ENCODE measurements at regions of chr6 and their contacts with region 1.

Region 1: GRCh38 chr6:11270030-11271027 is 37.9 kb upstream of the NEDD9 start:
- DNase-seq: no peak
- ATAC-seq: no peak
- H3K4me3 ChIP-seq: no peak overlapping the region
- H3K4me3 Mint-ChIP-seq: no peak overlapping the region
- H3K27ac ChIP-seq: no peak overlapping the region
- H3K27ac Mint-ChIP-seq: no peak overlapping the region
- H3K4me1 ChIP-seq: peaks cover 0 to under 1% of the 10 kb centered on the region in 2 experiments
- H3K4me1 Mint-ChIP-seq: peaks cover 9 to 24% (median 16%) of the 10 kb centered on the region in 3 donors
- H3K27me3 ChIP-seq: no peaks in the 10 kb centered on the region
- H3K27me3 Mint-ChIP-seq: no peaks in the 10 kb centered on the region

Region 2: DNA sequence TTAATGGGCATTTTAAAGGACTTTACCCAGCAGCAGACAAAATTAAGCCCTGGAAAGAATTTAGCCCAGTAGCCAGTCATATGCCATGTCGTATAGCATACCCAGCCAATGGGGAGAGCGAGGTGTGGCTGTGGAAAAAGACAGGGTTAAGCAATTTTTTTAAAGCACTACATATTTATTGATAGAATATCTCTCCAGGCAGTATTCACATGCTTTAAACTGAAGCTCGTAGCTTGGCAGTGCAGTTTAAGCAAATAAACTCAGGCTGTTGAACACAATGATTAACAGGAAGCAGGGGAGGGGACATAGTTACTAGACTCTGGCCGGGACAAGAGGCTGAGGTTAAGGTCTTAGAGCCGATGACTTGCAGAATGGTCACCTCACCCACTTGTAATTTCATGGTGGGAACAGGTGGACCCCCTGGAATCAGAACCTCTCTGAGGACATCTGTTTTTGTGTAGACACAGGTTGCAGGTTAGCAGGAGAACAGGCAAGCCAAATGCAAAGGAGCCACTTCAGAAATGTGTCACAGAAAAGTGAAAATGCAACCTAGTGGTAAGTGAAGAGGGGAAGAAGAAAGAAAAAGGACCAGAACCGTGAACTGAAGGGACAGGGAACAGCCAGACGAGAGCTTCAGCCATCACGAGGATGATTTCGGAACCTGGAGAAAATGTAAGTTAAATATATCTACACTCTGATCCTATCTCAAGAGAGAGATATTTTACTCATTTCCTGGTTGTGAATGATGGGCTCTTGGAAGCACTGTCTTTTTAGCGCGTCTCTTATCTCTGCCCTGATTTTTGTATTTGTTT is 742.0 kb before region 1 on chr6:
- CTCF ChIA-PET with region 1: no interaction called
- POLR2A ChIA-PET with region 1: no interaction called
- DNase-seq: peak in 7 of 35 experiments; percentile 2 to 40 (median 15)
- ATAC-seq: peak; percentile 70 to 81 (median 77)
- H3K4me3 ChIP-seq: peak overlapping the region; percentile 61 to 84
- H3K4me3 Mint-ChIP-seq: peak overlapping the region; percentile 89 to 93 (median 90)
- H3K27ac ChIP-seq: peak overlapping the region; percentile 39
- H3K27ac Mint-ChIP-seq: peak overlapping the region; percentile 78 to 94
- H3K4me1 ChIP-seq: peaks cover 0 to 40% of the 10 kb centered on the region in 2 experiments
- H3K4me1 Mint-ChIP-seq: peaks cover 42 to 45% (median 44%) of the 10 kb centered on the region in 3 donors
- H3K27me3 ChIP-seq: peaks cover 0 to 5% of the 10 kb centered on the region in 2 experiments
- H3K27me3 Mint-ChIP-seq: peaks cover 0 to 1% of the 10 kb centered on the region in 2 donors

Region 3: GRCh38 chr6:11309947-11310665 is 39.8 kb after region 1 on chr6:
- CTCF ChIA-PET with region 1: no interaction called
- POLR2A ChIA-PET with region 1: no interaction called
- DNase-seq: peak in 1 of 35 experiments; percentile 7
- ATAC-seq: no peak
- H3K4me3 ChIP-seq: no peak overlapping the region
- H3K4me3 Mint-ChIP-seq: no peak overlapping the region
- H3K27ac ChIP-seq: no peak overlapping the region
- H3K27ac Mint-ChIP-seq: no peak overlapping the region
- H3K4me1 ChIP-seq: no peaks in the 10 kb centered on the region
- H3K4me1 Mint-ChIP-seq: peaks cover 9 to 25% (median 16%) of the 10 kb centered on the region in 3 donors
- H3K27me3 ChIP-seq: no peaks in the 10 kb centered on the region
- H3K27me3 Mint-ChIP-seq: no peaks in the 10 kb centered on the region

Region 4: GRCh38 chr6:11350294-11350969 is 80.1 kb after region 1 on chr6:
- CTCF ChIA-PET with region 1: no interaction called
- POLR2A ChIA-PET with region 1: interaction called in 1 of 2 experiments, 11 read pairs
- DNase-seq: peak in 5 of 35 experiments; percentile 9 to 37 (median 16)
- ATAC-seq: no peak
- H3K4me3 ChIP-seq: no peak overlapping the region
- H3K4me3 Mint-ChIP-seq: no peak overlapping the region
- H3K27ac ChIP-seq: no peak overlapping the region
- H3K27ac Mint-ChIP-seq: no peak overlapping the region
- H3K4me1 ChIP-seq: peaks cover 20 to 21% of the 10 kb centered on the region in 2 experiments
- H3K4me1 Mint-ChIP-seq: peaks cover 88 to 97% (median 95%) of the 10 kb centered on the region in 3 donors
- H3K27me3 ChIP-seq: no peaks in the 10 kb centered on the region
- H3K27me3 Mint-ChIP-seq: no peaks in the 10 kb centered on the region

Region 5: DNA sequence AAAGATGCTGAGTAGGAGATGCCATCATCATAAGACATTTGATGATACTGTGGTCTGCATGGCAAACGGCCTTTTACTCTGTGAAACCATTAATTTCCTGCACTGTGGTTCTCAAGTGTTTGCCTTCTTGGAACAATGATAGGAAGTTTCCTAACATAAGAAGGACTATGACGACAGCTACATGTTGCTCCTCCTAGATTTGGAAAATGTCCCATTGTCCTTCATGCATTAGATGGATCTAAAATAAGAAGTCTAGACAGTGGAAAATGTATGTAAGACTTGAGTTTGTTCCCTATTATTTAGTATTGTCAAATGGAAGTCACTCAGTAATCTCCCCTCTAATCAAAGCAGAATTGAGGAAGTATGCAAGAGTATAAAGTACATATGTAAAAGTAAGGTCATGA is 168.7 kb after region 1 on chr6:
- CTCF ChIA-PET with region 1: no interaction called
- POLR2A ChIA-PET with region 1: no interaction called
- DNase-seq: no peak
- ATAC-seq: no peak
- H3K4me3 ChIP-seq: no peak overlapping the region
- H3K4me3 Mint-ChIP-seq: no peak overlapping the region
- H3K27ac ChIP-seq: no peak overlapping the region
- H3K27ac Mint-ChIP-seq: no peak overlapping the region
- H3K4me1 ChIP-seq: no peaks in the 10 kb centered on the region
- H3K4me1 Mint-ChIP-seq: peaks cover 0 to 7% (median 0%) of the 10 kb centered on the region in 3 donors
- H3K27me3 ChIP-seq: no peaks in the 10 kb centered on the region
- H3K27me3 Mint-ChIP-seq: no peaks in the 10 kb centered on the region

Region 6: DNA sequence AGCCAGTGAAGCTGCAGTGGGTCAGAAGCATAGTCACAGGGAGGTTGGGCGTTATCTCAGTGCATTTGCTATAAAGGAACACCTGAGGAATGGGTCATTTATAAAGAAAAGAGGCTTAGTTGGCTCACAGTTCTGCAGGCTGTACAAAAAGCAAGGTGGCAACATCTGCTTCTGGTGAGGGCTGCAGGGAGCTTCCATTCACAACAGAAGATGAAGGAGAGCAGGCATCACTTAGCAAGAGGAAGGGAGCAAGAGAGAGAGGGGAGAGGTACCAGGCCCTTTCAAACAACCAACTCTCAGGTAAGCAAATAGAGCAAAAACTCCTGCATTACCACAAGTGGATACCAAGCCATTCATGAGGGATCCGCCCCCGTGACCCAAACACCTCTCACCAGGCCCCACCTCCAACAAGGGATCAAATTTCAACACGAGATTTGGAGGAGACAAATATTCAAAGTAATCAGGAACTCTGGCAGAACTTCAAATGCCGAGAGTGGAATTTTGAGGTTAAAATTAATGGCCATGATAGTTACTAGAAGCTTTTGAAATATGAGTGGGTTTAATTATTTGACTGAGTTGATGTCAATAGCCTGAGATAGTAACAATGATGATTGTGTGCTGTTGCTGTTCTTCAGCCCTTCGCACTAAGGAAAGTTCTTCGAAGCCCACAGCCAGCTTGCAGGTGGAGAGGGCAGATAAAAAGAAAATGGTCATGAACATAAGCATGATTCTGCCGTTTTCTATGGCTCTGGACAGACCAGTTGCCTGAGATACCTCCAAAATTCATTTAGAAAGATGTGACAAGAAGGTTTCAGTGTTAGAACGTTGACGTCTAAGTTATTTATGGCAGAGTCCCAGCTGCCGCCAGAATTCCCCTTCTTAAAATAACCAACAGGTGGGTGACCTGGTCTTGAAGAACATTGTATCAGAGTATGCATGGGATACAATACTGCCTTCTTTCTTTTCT is 563.6 kb after region 1 on chr6:
- CTCF ChIA-PET with region 1: no interaction called
- POLR2A ChIA-PET with region 1: no interaction called
- DNase-seq: no peak
- ATAC-seq: no peak
- H3K4me3 ChIP-seq: no peak overlapping the region
- H3K4me3 Mint-ChIP-seq: no peak overlapping the region
- H3K27ac ChIP-seq: no peak overlapping the region
- H3K27ac Mint-ChIP-seq: no peak overlapping the region
- H3K4me1 ChIP-seq: no peaks in the 10 kb centered on the region
- H3K4me1 Mint-ChIP-seq: no peaks in the 10 kb centered on the region
- H3K27me3 ChIP-seq: peaks cover 0 to 7% of the 10 kb centered on the region in 2 experiments
- H3K27me3 Mint-ChIP-seq: no peaks in the 10 kb centered on the region